ENCODE measurements at regions of chr17 and their contacts with region 1.

Region 1: DNA sequence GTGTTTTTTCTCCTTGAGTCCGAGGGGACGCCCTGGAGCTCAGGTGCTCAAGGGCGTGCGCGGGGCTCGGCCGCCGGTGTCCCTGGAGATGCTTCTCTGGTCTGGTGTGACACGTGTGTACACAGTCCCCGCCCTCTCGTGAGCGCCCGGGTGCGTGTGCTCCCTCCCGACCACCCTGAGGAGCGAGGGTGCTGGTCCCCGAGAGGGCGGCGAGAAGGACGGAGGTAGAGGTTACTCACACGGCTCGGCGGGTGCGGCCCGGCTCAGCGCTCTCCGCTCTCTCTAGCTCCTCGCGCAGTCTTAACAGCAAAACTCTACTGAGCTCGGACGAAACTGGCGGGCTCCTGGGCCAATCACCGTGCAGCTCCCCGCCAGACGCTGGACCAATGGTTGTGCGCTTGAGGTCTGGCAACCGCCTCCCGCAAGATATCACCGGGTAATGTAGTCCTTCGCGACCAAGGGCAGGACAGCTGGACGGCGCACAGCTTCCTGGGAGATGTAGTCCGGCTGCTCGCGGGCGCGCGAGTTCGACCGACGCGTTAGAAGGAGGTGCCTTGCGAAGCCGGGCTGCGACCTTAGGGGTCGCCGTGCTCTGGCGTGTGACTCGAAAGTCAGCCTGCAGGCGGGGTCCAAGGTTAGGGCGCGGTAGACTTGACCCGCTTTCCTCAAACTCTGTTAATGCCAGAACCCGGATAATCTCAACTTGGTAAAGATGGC is at the start of gene SLC25A19:
- DNase-seq: peak; percentile 99
- H3K4me3 ChIP-seq: peak within 1 kb of the TSS; percentile 69
- H3K4me3 Mint-ChIP-seq: peak within 1 kb of the TSS; percentile 97
- H3K27ac Mint-ChIP-seq: peak within 1 kb of the TSS; percentile 96
- H3K4me1 ChIP-seq: peaks cover under 1% of the 10 kb centered on the region; the same call in 1 of the 2 replicates
- H3K4me1 Mint-ChIP-seq: peaks cover 7% of the 10 kb centered on the region
- H3K27me3 ChIP-seq: no peaks in the 10 kb centered on the region
- H3K27me3 Mint-ChIP-seq: no peaks in the 10 kb centered on the region
- CTCF ChIP-seq: peak; percentile 45 to 74
- total RNA-seq, gene SLC25A19: 29.8 and 33.6 TPM in 2 replicates

Region 2: DNA sequence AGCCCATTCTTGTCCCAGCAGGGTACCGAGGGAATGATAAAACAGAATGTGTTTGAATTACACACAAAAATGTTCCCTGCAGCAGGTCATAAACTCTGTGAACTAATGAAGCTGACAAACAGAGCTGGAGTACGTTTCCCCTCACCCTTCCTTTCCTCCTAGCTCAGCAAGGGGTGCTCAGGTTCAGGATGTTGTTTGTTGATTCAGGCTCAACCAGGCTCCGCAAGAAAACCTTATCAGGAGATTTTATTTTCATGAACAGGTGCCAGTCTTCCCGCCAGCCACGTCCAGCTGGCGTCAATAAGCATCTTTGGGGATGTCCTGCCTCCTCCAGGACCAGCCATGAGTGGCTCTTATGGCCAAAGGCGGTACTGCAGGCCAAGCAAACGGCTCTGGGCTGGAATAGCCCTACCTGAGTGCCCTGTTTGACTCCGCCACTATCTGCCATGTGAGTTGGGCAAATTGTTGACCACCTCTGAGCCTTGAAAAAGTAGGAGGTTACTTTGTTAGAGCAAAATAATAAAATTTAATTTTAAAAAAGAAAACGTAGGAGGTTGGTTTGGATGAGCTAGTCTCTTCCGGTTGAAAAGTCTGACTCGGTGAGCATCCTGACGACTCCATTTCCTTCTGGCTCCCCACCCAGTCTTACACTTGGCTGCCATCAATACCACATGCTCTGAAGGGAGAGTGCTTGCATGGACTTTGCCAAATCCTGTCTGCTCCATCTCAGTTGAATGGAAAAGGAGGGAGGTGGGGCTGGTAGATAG is 183.5 kb before region 1 on chr17:
- CTCF ChIA-PET with region 1: no interaction called
- POLR2A ChIA-PET with region 1: no interaction called
- intact Hi-C with region 1: no loop called
- DNase-seq: peak; percentile 74 to 77
- H3K4me3 ChIP-seq: no peak overlapping the region
- H3K4me3 Mint-ChIP-seq: no peak overlapping the region
- H3K27ac Mint-ChIP-seq: peak overlapping the region; percentile 61
- H3K4me1 ChIP-seq: no peaks in the 10 kb centered on the region
- H3K4me1 Mint-ChIP-seq: peaks cover 6% of the 10 kb centered on the region
- H3K27me3 ChIP-seq: no peaks in the 10 kb centered on the region
- H3K27me3 Mint-ChIP-seq: no peaks in the 10 kb centered on the region
- CTCF ChIP-seq: peak; percentile 81 to 85

Region 3: DNA sequence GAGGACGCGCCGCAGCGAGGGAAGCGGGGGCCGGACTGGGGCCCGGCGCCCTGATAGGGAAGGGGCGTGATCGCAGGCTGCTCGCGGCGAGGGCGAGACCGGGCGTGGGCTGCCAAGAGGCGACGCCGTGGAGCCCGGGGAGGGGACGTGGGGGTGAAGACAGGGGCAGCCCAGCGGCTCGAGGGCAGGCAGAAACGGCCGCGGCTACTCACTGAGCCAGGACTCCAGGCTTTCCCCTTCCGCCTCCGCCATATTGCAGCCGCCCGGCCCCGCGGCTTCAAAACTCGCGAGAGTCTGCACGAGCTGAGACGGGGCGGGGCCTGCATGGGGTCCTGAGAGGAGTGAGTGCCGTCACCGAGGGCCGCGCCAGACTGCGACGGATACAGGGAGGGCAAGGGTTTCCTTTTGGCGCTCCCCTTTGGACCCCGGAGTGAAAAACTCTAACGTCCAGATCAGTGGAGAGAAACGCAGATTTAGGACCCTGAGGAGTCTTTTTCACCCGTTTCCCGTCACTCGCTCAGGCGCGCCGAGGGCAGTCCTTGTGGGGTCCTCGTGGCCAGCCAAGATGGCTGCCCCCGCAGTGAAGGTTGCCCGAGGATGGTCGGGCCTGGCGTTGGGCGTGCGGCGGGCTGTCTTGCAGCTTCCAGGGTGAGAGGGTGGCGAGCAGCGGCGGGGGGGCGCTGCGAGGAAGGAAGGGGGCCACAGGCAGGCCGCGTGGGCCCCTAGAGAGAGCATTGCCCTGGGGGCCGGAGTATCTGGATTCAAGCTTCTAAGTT is 27.7 kb before region 1 on chr17 and contains the starts of genes GGA3 and MRPS7:
- CTCF ChIA-PET with region 1: interaction called, 14 read pairs
- POLR2A ChIA-PET with region 1: interaction called, 20 read pairs
- intact Hi-C with region 1: loop called (anchors 2 kb)
- DNase-seq: peak; percentile 95 to 97
- H3K4me3 ChIP-seq: peak within 1 kb of the TSS; percentile 89
- H3K4me3 Mint-ChIP-seq: peak within 1 kb of the TSS; percentile 97
- H3K27ac Mint-ChIP-seq: peak within 1 kb of the TSS; percentile 100
- H3K4me1 ChIP-seq: no peaks in the 10 kb centered on the region
- H3K4me1 Mint-ChIP-seq: peaks cover 28% of the 10 kb centered on the region
- H3K27me3 ChIP-seq: no peaks in the 10 kb centered on the region
- H3K27me3 Mint-ChIP-seq: no peaks in the 10 kb centered on the region
- CTCF ChIP-seq: no peak
- total RNA-seq, gene GGA3: 90.2 and 94.4 TPM in 2 replicates
- total RNA-seq, gene MRPS7: 123 and 125 TPM in 2 replicates

Region 4: DNA sequence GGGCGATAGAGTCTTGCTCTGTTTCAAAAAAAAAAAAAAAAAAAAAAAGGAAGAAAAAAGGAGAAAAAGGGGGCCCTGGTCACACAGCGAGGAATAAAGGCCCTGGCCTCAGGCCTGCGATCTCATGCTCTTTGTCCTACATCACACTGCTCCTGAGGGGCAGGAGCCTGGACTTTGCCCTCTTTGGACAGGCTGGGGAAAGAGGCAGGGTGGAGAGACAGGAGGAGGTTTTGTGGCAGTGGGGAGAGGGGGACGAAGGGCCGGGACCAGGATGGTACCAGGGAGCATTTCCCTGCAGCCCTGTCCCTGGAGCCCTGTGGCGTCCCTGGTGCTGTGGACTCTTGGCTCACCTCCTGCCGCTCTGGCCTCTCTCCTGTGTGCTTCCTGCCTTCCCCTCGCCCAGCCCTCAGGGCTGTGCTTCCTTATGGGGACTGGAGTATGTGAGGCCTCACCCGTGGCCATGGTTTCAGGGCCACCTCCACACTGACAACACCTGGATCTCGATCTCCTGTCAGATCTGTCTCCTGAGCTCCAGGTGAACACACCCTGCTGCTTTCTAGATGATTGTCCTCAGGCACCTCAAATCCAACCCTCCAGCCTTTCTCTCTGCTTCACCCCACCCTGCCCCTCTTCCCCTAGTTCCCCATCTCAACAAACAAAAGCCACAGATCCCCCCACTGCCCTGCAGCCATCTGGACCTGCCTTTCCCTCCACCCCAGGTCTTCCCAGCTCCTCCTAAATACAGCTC is 19.9 kb after region 1 on chr17:
- CTCF ChIA-PET with region 1: interaction called, 3 read pairs
- POLR2A ChIA-PET with region 1: interaction called, 7 read pairs
- intact Hi-C with region 1: loop called (anchors 2 kb)
- DNase-seq: peak; percentile 73 to 87
- H3K4me3 ChIP-seq: no peak overlapping the region
- H3K4me3 Mint-ChIP-seq: peak overlapping the region; percentile 45
- H3K27ac Mint-ChIP-seq: peak overlapping the region; percentile 96
- H3K4me1 ChIP-seq: peaks cover 25% of the 10 kb centered on the region
- H3K4me1 Mint-ChIP-seq: peaks cover 35% of the 10 kb centered on the region
- H3K27me3 ChIP-seq: no peaks in the 10 kb centered on the region; the same call in 1 of the 2 replicates
- H3K27me3 Mint-ChIP-seq: no peaks in the 10 kb centered on the region
- CTCF ChIP-seq: no peak

Region 5: GRCh38 chr17:75380315-75380714 is 91.0 kb after region 1 on chr17:
- CTCF ChIA-PET with region 1: no interaction called
- POLR2A ChIA-PET with region 1: interaction called, 7 read pairs
- intact Hi-C with region 1: loop called (anchors 2 kb)
- DNase-seq: no peak
- H3K4me3 ChIP-seq: no peak overlapping the region
- H3K4me3 Mint-ChIP-seq: no peak overlapping the region
- H3K27ac Mint-ChIP-seq: no peak overlapping the region
- H3K4me1 ChIP-seq: peaks cover 19% of the 10 kb centered on the region
- H3K4me1 Mint-ChIP-seq: peaks cover 18% of the 10 kb centered on the region
- H3K27me3 ChIP-seq: no peaks in the 10 kb centered on the region
- H3K27me3 Mint-ChIP-seq: no peaks in the 10 kb centered on the region
- CTCF ChIP-seq: no peak

Region 6: GRCh38 chr17:75405365-75406221 is 116.3 kb after region 1 on chr17 and contains the start of gene GRB2:
- CTCF ChIA-PET with region 1: interaction called, 24 read pairs
- POLR2A ChIA-PET with region 1: interaction called, 26 read pairs
- intact Hi-C with region 1: loop called (anchors 1 kb)
- DNase-seq: peak; percentile 99 to 100
- H3K4me3 ChIP-seq: peak within 1 kb of the TSS; percentile 70
- H3K4me3 Mint-ChIP-seq: peak within 1 kb of the TSS; percentile 78
- H3K27ac Mint-ChIP-seq: peak within 1 kb of the TSS; percentile 71
- H3K4me1 ChIP-seq: 0 out of 2 replicates have a peak, but pooled peaks cover 6% of the 10 kb centered on the region
- H3K4me1 Mint-ChIP-seq: peaks cover 12% of the 10 kb centered on the region
- H3K27me3 ChIP-seq: no peaks in the 10 kb centered on the region
- H3K27me3 Mint-ChIP-seq: no peaks in the 10 kb centered on the region
- CTCF ChIP-seq: no peak
- total RNA-seq, gene GRB2: 113 and 115 TPM in 2 replicates

Region 7: GRCh38 chr17:75456417-75457046 is 167.3 kb after region 1 on chr17 and contains the start of gene TMEM94:
- CTCF ChIA-PET with region 1: interaction called, 6 read pairs
- POLR2A ChIA-PET with region 1: interaction called, 9 read pairs
- intact Hi-C with region 1: loop called (anchors 1 kb)
- DNase-seq: peak; percentile 96 to 97
- H3K4me3 ChIP-seq: peak within 1 kb of the TSS; percentile 46
- H3K4me3 Mint-ChIP-seq: peak within 1 kb of the TSS; percentile 92
- H3K27ac Mint-ChIP-seq: peak within 1 kb of the TSS; percentile 94
- H3K4me1 ChIP-seq: peaks cover 45% of the 10 kb centered on the region
- H3K4me1 Mint-ChIP-seq: peaks cover 30% of the 10 kb centered on the region
- H3K27me3 ChIP-seq: no peaks in the 10 kb centered on the region
- H3K27me3 Mint-ChIP-seq: no peaks in the 10 kb centered on the region
- CTCF ChIP-seq: no peak
- total RNA-seq, gene TMEM94: 109 and 115 TPM in 2 replicates